Psoas muscle (tissue), 8 donors: ENCODE measurements at regions of chr10 and their contacts with region 1.

Region 1: DNA sequence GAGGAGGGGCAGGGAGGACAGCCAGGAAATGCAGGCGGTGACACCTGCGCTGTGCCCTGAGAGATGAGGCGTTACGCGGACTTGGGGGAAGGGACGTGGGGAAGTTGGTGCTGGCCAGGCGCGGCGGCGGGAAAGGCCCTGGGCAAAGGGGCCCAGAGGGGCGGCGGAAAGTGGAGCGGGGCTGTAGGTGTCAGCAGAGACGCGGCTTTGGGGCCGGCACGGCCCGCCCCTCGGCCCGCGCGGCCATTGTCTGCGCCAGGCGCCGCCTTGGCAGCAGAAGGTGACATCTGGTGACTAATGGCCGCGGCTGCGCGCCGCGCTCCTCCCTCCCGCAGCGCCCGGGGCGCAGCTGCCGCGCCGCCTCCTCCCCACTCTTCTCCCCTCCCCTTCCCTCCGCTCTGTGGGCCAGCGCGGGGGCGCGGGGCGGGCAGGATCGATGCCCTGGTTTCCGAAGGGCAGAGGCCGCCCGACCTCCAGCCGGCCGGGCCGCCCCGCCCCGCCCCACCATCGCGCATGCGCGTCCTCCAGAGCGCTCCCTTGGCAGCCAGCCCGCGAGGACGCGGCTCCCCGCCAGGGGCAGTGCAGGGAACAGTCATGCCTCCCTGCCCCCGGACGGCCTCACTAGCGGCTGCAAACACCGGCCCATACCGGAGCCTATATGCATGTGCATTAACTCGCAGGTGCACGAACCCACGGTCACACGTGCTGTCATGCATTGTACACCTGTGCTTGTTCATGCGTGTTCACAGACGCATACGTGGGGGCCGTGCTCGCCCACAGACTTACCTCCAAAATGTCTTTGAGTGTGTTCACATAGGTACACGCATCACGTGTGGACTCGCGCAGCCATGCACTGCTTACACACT is 269.6 kb downstream of the RPS24 start:
- DNase-seq: peak; percentile 96 to 97
- ATAC-seq: peak; percentile 94 to 96 (median 96)
- H3K4me3 ChIP-seq: peak overlapping the region; percentile 79
- H3K27ac ChIP-seq: peak overlapping the region; percentile 89
- H3K4me1 ChIP-seq: peaks cover 14% of the 10 kb centered on the region
- H3K27me3 ChIP-seq: no peaks in the 10 kb centered on the region
- CTCF ChIP-seq: peak; percentile 60

Region 2: GRCh38 chr10:78231939-78232338 is 71.3 kb before region 1 on chr10:
- intact Hi-C with region 1: loop called in 1 of 2 experiments (anchors 5 kb)
- DNase-seq: peak in 1 of 2 donors; percentile 35
- ATAC-seq: peak; percentile 65 to 95 (median 90)
- H3K4me3 ChIP-seq: no peak overlapping the region
- H3K27ac ChIP-seq: no peak overlapping the region
- H3K4me1 ChIP-seq: peaks cover 5% of the 10 kb centered on the region
- H3K27me3 ChIP-seq: no peaks in the 10 kb centered on the region
- CTCF ChIP-seq: peak; percentile 38

Region 3: GRCh38 chr10:78657163-78657861 is 354.1 kb after region 1 on chr10:
- intact Hi-C with region 1: loop called in 1 of 2 experiments (anchors 5 kb)
- DNase-seq: peak; percentile 76 to 87
- ATAC-seq: peak; percentile 89 to 97 (median 96)
- H3K4me3 ChIP-seq: no peak overlapping the region
- H3K27ac ChIP-seq: no peak overlapping the region
- H3K4me1 ChIP-seq: no peaks in the 10 kb centered on the region
- H3K27me3 ChIP-seq: peaks cover 0 to 11% (median 0%) of the 10 kb centered on the region in 3 donors
- CTCF ChIP-seq: peak; percentile 73